ENCODE measurements at regions of chr5 and their contacts with region 1.

Region 1: GRCh38 chr5:171863930-171864329 is 78.3 kb downstream of the SMIM23 start:
- DNase-seq: no peak
- H3K4me3 ChIP-seq: no peak overlapping the region
- H3K27ac ChIP-seq: peak overlapping the region; percentile 17 to 27
- H3K4me1 ChIP-seq: no peaks in the 10 kb centered on the region
- H3K27me3 ChIP-seq: no peaks in the 10 kb centered on the region
- CTCF ChIP-seq: no peak

Region 2: GRCh38 chr5:171676286-171676944 is 187.5 kb before region 1 on chr5:
- intact Hi-C with region 1: loop called (anchors 10 kb)
- DNase-seq: peak; percentile 16 to 61
- H3K4me3 ChIP-seq: no peak overlapping the region
- H3K27ac ChIP-seq: no peak overlapping the region
- H3K4me1 ChIP-seq: no peaks in the 10 kb centered on the region
- H3K27me3 ChIP-seq: no peaks in the 10 kb centered on the region
- CTCF ChIP-seq: no peak

Region 3: GRCh38 chr5:171946000-171946774 is 82.3 kb after region 1 on chr5:
- intact Hi-C with region 1: no loop called
- DNase-seq: no peak
- H3K4me3 ChIP-seq: no peak overlapping the region
- H3K27ac ChIP-seq: no peak overlapping the region
- H3K4me1 ChIP-seq: no peaks in the 10 kb centered on the region
- H3K27me3 ChIP-seq: no peaks in the 10 kb centered on the region
- CTCF ChIP-seq: no peak

Region 4: DNA sequence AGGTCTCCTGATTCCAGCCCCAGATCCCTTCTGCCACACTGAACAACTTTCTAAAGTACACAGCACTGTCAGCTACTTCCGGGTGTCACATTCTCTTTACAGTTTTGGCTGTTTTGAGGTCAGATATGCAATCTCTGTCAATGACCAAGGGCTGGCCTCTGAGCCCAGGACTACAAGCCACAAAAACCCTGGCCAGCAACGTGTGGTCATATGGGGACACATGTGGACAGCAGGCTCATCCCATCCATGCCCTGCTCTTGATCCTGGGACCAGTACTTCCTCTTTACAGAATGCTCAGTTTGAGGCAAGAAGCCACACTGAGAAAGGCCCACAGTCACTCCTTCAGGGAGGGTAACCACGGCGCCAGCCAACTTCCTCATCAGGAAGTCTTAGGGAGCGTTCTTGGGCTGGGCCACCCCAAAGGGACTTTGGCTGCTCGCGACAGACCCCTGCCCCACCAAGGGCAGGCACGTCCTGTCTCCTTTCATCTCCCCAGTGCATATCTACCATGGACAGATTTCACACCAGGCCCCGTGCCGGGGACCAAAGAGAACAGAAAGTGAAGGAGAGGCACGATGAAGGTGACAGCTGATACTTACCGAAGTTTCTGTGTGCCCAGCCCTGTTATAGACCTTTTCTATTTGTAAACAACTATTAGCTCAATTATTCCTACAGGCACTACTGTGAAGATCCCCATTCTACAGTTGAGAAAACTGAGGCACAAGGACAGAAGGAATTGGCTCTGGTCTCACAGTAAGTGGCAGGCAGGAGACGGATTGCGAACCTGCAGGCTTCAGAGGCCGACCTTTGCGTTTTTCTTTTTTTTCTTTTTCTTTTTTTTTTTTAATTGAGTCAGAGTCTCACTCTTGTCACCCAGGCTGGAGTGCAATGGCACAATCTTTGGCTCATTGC is 286.8 kb after region 1 on chr5:
- intact Hi-C with region 1: no loop called
- DNase-seq: peak; percentile 50 to 82
- H3K4me3 ChIP-seq: no peak overlapping the region
- H3K27ac ChIP-seq: no peak overlapping the region
- H3K4me1 ChIP-seq: no peaks in the 10 kb centered on the region
- H3K27me3 ChIP-seq: no peaks in the 10 kb centered on the region
- CTCF ChIP-seq: no peak